GM12878 (cell line): ENCODE measurements at regions of chr20 and their contacts with region 1.

Region 1: DNA sequence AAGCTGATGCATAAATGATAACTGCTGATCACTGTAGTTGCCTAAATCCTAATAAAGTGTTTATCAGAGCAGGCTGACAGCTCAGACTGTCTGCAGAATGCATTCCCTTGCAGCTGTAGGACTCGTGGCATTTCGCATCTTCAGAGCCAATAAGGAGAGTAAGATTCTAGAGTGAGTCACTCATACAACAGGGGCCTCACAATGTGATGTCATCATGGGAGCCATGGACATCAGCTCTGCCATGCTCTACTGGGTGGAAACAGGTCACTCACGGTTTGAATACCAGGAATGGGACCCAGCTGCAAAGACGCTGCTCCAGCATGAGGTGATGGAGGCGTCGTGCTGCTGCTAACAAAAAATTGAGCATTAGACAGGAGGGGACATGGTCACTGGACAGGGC is 7.4 kb downstream of the FAM209B start:
- DNase-seq: no peak
- ATAC-seq: no peak
- H3K4me3 ChIP-seq: no peak overlapping the region
- H3K27ac ChIP-seq: no peak overlapping the region
- H3K4me1 ChIP-seq: no peaks in the 10 kb centered on the region
- H3K27me3 ChIP-seq: no peaks in the 10 kb centered on the region
- CTCF ChIP-seq: no peak
- EP300 ChIP-seq: no peak
- POLR2A ChIP-seq: no peak
- RAD21 ChIP-seq: no peak

Region 2: GRCh38 chr20:56409521-56409920 is 130.9 kb before region 1 on chr20:
- CTCF ChIA-PET with region 1: no interaction called
- POLR2A ChIA-PET with region 1: no interaction called
- RAD21 ChIA-PET with region 1: no interaction called
- SMC1A ChIA-PET with region 1: no interaction called
- in situ Hi-C with region 1: no loop called
- intact Hi-C with region 1: no loop called
- DNase-seq: no peak
- ATAC-seq: no peak
- H3K4me3 ChIP-seq: no peak overlapping the region
- H3K27ac ChIP-seq: no peak overlapping the region
- H3K4me1 ChIP-seq: peaks cover 6% of the 10 kb centered on the region; the same call in 1 of the 2 replicates
- H3K27me3 ChIP-seq: no peaks in the 10 kb centered on the region
- CTCF ChIP-seq: no peak
- EP300 ChIP-seq: no peak
- POLR2A ChIP-seq: no peak
- RAD21 ChIP-seq: no peak

Region 3: GRCh38 chr20:56711013-56711412 is 170.6 kb after region 1 on chr20:
- CTCF ChIA-PET with region 1: no interaction called
- POLR2A ChIA-PET with region 1: no interaction called
- RAD21 ChIA-PET with region 1: no interaction called
- SMC1A ChIA-PET with region 1: no interaction called
- in situ Hi-C with region 1: no loop called
- intact Hi-C with region 1: no loop called
- DNase-seq: no peak
- ATAC-seq: no peak
- H3K4me3 ChIP-seq: no peak overlapping the region
- H3K27ac ChIP-seq: no peak overlapping the region
- H3K4me1 ChIP-seq: no peaks in the 10 kb centered on the region
- H3K27me3 ChIP-seq: no peaks in the 10 kb centered on the region; a peak in 1 of 4 replicates
- CTCF ChIP-seq: no peak
- EP300 ChIP-seq: no peak
- POLR2A ChIP-seq: no peak
- RAD21 ChIP-seq: no peak

Region 4: DNA sequence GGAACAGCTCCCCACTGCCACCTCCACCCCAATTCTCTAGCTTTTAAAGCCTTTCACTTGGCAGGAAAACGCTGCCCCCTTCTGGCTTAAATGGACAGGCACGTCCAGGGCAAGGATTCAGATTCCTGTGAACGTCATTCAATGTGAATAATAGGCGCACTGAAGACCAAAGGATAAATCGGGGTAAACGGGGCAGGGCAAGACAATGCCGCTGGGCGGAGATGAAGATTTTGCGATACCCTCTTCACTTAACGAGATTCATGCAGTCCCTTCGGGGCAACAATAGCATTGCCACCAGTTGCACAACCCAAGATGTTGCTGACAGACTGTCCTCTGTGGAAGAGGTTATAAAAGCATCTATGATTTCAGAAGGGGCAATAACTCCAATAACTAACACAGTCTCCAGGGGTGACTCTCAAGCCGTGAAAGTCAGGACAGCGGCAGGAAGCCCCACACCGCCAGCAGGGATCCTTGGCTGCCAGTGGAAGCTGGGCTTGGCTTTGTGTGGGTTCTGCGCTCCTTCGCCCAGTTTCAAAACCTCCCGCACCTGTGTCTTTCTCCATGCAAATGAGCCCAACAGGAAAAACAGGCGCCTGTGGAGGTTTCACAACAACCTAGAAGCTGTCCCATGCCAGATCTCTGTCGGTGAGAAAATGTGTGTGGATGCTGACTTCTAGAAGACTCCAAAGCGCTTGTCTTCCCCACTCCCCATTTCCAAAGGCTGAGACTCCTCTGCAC is 434.2 kb after region 1 on chr20:
- CTCF ChIA-PET with region 1: no interaction called
- POLR2A ChIA-PET with region 1: no interaction called
- RAD21 ChIA-PET with region 1: no interaction called
- SMC1A ChIA-PET with region 1: no interaction called
- in situ Hi-C with region 1: loop called (anchors 5 kb)
- intact Hi-C with region 1: no loop called
- DNase-seq: no peak
- ATAC-seq: peak; percentile 46; the same call in 2 of the 3 replicates
- H3K4me3 ChIP-seq: no peak overlapping the region
- H3K27ac ChIP-seq: no peak overlapping the region
- H3K4me1 ChIP-seq: no peaks in the 10 kb centered on the region
- H3K27me3 ChIP-seq: no peaks in the 10 kb centered on the region; a peak in 1 of 4 replicates
- CTCF ChIP-seq: peak; percentile 38 to 46 (median 43); a peak in 5 of 6 replicates
- EP300 ChIP-seq: no peak
- POLR2A ChIP-seq: no peak
- RAD21 ChIP-seq: peak; percentile 54